Naive thymus-derived CD4-positive, alpha-beta T cell (primary cell): ENCODE measurements at regions of chr5 and their contacts with region 1.

Region 1: DNA sequence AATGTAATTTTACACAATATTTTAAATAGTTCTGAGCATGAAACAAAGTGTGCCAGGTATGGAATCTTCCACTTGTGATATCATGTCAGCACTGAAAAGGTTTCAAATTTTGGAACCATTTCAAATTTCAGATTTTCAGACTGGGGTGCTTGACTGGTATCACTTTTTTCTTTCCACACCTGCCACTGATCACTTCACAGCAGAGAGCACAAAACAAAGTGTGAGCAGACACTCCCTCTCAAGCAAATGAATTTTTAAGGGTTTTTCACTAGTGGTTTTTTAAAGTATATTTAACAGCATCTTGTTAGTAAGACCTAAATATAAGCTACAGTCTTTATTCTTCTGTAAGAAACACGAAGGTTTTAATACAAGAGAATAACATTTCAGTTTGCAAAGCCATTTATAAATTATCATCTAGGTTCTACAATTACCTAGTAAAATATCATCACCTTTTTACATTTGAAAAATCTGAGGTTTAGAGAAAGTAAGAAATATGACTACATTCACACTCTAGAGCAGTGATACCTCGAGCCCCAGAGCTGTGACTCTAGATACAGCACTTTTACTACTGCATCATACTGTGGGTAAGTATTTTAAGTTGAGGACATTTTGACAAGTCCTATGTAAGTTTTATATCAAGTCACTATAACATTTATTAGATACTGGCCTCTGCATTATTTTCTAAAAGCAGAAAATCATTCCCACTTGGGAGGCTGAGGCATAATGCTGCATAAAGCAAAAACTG is 14.6 kb downstream of the GOLPH3 start:
- DNase-seq: no peak
- ATAC-seq: peak; percentile 38
- H3K4me3 ChIP-seq: no peak overlapping the region
- H3K4me3 Mint-ChIP-seq: peak overlapping the region in 1 of 10 donors; percentile 44
- H3K27ac ChIP-seq: no peak overlapping the region
- H3K27ac Mint-ChIP-seq: no peak overlapping the region
- H3K4me1 ChIP-seq: peaks cover 3 to 12% of the 10 kb centered on the region in 2 donors
- H3K4me1 Mint-ChIP-seq: peaks cover 7 to 28% (median 25%) of the 10 kb centered on the region in 7 donors
- H3K27me3 ChIP-seq: no peaks in the 10 kb centered on the region
- H3K27me3 Mint-ChIP-seq: no peaks in the 10 kb centered on the region

Region 2: DNA sequence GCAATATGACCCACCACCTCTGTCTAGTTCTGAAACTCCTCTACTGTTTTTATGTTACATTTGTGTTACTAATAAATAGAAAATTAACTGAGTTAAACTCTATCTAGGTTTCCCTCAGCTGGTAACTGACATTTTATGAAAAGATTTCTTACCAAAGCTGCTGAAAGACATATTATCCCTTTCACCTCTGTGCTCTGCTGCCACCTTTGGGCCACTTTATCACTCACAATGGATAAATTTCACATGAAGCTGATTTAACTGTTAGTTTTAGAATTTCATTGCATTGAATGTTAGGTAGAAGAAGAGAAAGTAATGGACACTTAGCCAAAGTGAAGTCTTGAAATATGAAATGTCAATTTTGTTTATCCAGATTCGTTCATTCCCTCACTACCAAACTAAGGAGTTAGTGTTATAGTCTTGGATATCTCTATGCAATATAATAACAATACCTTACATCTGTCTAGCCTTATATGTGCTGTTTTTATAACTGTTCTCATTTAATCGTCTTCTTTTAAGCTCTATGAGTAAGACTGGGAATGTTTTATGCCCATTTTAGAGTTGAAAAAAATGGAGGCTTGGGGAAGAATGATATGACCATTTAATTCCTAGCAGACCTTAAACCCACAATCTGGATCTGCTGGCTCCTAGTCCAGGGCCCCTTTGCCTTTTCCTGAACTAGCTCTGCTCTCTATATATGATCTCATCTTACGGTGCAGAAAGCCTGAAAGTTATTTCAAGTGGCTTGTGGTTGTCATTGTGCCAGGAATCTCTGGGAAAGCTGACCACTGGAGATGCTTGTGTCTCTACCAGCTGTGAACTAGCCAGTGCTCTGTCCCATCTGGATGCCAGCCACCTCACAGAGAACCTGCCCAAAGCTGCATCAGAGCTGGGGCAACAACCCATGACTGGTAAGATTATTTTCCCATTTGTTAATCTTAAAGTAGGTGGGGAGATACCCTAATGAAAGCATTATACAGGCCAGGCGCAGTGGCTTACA is 82.5 kb before region 1 on chr5:
- CTCF ChIA-PET with region 1: no interaction called
- POLR2A ChIA-PET with region 1: no interaction called
- intact Hi-C with region 1: no loop called
- DNase-seq: peak in 6 of 9 donors; percentile 10 to 66 (median 57)
- ATAC-seq: no peak
- H3K4me3 ChIP-seq: no peak overlapping the region
- H3K4me3 Mint-ChIP-seq: no peak overlapping the region
- H3K27ac ChIP-seq: no peak overlapping the region
- H3K27ac Mint-ChIP-seq: no peak overlapping the region
- H3K4me1 ChIP-seq: no peaks in the 10 kb centered on the region
- H3K4me1 Mint-ChIP-seq: peaks cover 0 to 5% (median 0%) of the 10 kb centered on the region in 7 donors
- H3K27me3 ChIP-seq: no peaks in the 10 kb centered on the region
- H3K27me3 Mint-ChIP-seq: no peaks in the 10 kb centered on the region

Region 3: DNA sequence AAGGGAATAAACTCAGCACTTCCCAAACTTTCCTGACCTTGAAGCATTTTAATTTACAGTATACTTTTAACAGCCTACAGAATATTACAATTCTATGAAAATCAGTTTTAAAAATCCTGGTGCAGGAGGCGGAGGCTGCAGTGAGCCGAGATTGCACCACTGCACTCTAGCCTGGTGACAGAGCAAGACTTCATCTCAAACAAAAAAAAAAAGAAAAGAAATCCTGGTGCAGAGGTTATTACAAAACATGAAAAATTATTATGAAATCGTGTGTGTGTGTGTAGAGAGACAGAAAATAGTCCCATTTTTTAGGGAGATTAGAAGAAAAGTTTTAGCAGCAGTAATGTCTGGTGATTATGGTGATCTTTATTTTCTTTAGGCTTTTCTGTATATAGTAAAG is 12.3 kb before region 1 on chr5:
- CTCF ChIA-PET with region 1: no interaction called
- POLR2A ChIA-PET with region 1: no interaction called
- intact Hi-C with region 1: loop called in 1 of 2 experiments (anchors 1 kb)
- DNase-seq: no peak
- ATAC-seq: no peak
- H3K4me3 ChIP-seq: no peak overlapping the region
- H3K4me3 Mint-ChIP-seq: peak overlapping the region in 3 of 10 donors; percentile 7 to 24 (median 8)
- H3K27ac ChIP-seq: no peak overlapping the region
- H3K27ac Mint-ChIP-seq: peak overlapping the region in 6 of 9 donors; percentile 4 to 81 (median 48)
- H3K4me1 ChIP-seq: peaks cover 0 to 20% of the 10 kb centered on the region in 2 donors
- H3K4me1 Mint-ChIP-seq: peaks cover 22 to 72% (median 66%) of the 10 kb centered on the region in 7 donors
- H3K27me3 ChIP-seq: no peaks in the 10 kb centered on the region
- H3K27me3 Mint-ChIP-seq: no peaks in the 10 kb centered on the region